ENCODE measurements at regions of chr1 and their contacts with region 1.

Region 1: DNA sequence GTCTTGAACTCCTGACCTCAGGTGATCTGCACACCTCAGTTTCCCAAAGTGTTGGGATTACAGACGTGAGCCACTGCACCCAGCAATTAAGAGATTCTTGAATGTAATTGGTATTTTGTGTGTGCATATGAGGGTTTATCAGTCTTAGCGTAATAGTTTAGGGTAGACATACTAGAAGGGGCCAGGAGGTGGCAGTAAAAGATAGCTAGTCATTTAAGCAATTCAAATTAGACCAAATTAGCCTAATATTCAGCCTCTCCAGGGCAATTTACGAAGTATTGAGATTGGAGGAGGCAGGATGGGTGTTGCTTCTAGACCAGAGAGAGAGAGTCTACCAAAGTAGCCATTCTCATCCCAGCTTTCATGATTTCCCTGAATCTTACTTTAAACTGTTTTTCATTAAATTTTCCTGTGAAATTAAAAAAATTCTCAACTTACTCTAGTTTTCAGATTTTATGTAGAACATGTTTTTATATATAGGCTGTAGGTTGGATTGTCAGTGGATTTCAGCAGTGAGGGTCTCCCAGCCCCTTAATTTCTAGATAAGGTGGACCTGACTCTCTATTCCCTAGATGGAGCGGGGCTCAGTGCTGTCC is 119.7 kb downstream of the HHAT start:
- DNase-seq: peak; percentile 56
- H3K4me3 Mint-ChIP-seq: no peak overlapping the region
- H3K27ac Mint-ChIP-seq: no peak overlapping the region
- H3K4me1 Mint-ChIP-seq: peaks cover 31% of the 10 kb centered on the region
- H3K27me3 Mint-ChIP-seq: peaks cover 7% of the 10 kb centered on the region

Region 2: DNA sequence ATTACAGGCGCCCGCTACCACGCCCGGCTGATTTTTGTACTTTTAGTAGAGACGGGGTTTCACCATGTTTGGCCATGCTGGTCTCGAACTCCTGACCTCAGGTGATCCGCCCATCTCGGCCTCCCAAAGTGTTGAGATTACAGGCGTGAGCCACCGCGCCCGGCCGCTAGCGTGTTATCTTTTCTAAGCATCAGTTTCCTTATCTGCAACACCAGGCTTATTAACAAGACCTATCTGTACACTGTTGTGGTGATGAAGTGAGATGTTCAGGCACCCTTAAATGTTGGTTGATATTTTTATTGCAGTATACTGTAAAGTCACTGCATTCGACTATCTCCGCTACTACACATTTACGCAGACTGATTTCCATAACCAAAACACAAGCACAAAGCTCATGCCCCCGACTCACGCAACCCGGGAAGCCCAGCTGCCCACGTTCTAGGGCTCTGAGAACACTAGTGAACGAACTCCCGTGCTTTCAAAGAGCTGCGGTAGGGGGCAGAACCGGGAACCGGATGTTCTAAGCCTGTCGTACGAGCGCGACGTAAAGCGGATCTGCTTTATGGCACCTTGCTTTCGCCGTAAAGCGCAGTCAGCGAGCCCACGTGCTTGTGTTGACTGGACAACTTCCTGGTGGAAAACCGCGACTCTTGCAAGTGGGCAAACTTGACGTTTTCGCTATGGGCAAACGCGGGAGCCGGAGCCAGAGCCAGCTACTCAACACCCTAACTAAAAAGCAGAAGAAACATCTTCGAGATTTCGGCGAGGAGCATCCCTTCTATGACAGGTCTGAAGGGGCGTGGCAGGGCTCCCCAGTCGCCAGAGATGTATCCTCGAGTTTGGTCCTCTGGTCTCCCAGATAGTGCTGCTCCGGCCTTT is 620.8 kb before region 1 on chr1 and contains the start of gene UTP25:
- CTCF ChIA-PET with region 1: interaction called, 7 read pairs
- intact Hi-C with region 1: loop called (anchors 5 kb)
- DNase-seq: peak; percentile 97
- H3K4me3 Mint-ChIP-seq: peak within 1 kb of the TSS; percentile 79
- H3K27ac Mint-ChIP-seq: peak within 1 kb of the TSS; percentile 86
- H3K4me1 Mint-ChIP-seq: peaks cover 34% of the 10 kb centered on the region
- H3K27me3 Mint-ChIP-seq: peaks cover 4% of the 10 kb centered on the region
- total RNA-seq, gene UTP25: 4.1 to 4.6 TPM

Region 3: GRCh38 chr1:210400043-210400840 is 48.2 kb before region 1 on chr1:
- CTCF ChIA-PET with region 1: interaction called, 14 read pairs
- intact Hi-C with region 1: loop called (anchors 1 kb)
- DNase-seq: peak; percentile 85
- H3K4me3 Mint-ChIP-seq: peak overlapping the region; percentile 49
- H3K27ac Mint-ChIP-seq: peak overlapping the region; percentile 93
- H3K4me1 Mint-ChIP-seq: peaks cover 44% of the 10 kb centered on the region
- H3K27me3 Mint-ChIP-seq: peaks cover 5% of the 10 kb centered on the region

Region 4: DNA sequence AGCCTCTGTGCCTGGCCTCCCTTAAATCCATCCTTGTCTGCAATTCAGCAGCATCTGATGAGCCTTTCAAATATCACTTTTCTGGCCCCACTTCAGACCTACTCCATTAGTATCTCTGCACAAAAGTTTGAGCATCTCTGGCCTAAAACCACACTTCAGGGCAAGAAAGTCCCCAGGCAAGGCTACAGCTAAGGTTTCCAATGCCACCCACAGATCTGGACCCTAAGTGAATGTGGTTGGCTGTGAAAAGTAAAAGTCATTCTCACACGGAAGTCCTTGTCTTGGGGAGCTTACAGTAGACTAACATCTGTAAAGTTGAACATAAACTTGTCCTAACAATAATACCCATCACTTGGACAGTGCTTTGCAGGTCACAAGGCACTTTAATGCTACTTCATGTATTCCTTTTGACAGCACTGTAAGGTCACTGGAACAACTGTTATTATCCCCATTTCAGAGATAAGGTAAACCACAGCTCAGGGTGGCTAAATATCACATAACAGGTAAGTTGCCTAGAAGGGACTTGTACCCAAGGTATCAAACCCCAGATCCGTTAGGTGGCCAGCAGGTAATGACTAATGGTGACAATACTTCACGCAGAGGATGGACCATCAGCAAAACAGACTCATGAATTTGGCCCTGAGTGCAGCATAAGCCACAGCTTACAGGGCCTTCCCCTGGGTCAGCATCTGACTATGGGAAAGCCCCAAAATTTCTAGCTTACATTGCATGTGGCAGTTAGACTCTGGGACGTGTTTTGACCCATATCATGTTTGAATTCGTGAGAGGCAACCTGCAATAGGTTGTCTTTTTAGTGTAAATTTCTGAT is 236.3 kb after region 1 on chr1:
- CTCF ChIA-PET with region 1: no interaction called
- intact Hi-C with region 1: loop called (anchors 5 kb)
- DNase-seq: peak; percentile 15
- H3K4me3 Mint-ChIP-seq: no peak overlapping the region
- H3K27ac Mint-ChIP-seq: no peak overlapping the region
- H3K4me1 Mint-ChIP-seq: peaks cover 3% of the 10 kb centered on the region
- H3K27me3 Mint-ChIP-seq: no peaks in the 10 kb centered on the region

Region 5: GRCh38 chr1:211258756-211259637 is 810.6 kb after region 1 on chr1 and contains the start of gene RCOR3:
- CTCF ChIA-PET with region 1: no interaction called
- intact Hi-C with region 1: loop called (anchors 5 kb)
- DNase-seq: peak; percentile 93
- H3K4me3 Mint-ChIP-seq: peak within 1 kb of the TSS; percentile 90
- H3K27ac Mint-ChIP-seq: peak within 1 kb of the TSS; percentile 96
- H3K4me1 Mint-ChIP-seq: peaks cover 16% of the 10 kb centered on the region
- H3K27me3 Mint-ChIP-seq: no peaks in the 10 kb centered on the region
- total RNA-seq, gene RCOR3: 28.9 to 30.8 TPM

Region 6: DNA sequence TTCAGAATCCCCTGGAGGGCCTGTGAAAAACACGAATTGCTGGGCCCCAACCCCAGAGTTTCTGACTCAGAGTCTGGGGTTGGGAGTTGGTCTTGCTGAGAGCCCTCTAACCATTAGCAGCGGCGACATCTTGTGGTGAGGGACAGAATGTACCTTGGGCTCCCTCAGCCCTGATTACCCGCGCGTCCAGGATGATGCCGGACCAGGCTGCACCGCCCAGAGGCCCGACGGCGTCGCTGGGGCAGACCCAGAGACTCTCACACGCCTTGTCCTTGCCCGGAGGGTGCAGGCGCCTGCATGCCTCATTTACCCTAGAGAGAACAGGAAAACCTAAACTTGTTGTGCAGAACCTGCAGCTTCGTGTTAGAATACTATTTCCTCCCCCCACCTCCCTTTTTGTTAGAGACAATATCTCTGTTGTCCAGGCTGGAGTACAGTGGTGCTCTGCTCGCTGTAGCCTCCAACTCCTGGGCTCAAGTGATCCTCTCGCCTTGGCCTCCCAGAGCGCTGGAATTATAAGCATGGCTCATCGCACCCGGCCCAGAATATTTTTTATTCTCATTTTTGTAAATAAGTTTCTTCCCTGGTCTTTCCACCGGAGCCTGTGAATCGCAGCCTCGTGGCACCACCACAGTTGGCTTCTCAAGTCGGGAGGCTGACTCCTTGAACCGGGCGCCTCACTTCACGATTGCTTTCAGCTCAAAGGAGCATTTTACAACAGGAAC is 1065.8 kb after region 1 on chr1:
- CTCF ChIA-PET with region 1: interaction called, 5 read pairs
- intact Hi-C with region 1: loop called (anchors 1 kb)
- DNase-seq: peak; percentile 90
- H3K4me3 Mint-ChIP-seq: peak overlapping the region; percentile 23
- H3K27ac Mint-ChIP-seq: no peak overlapping the region
- H3K4me1 Mint-ChIP-seq: peaks cover 23% of the 10 kb centered on the region
- H3K27me3 Mint-ChIP-seq: no peaks in the 10 kb centered on the region

Measured in activated naive CD4-positive, alpha-beta T cell treated with anti-CD3 and anti-CD28 coated beads for 36 hours (primary cell).